Activated CD4-positive, alpha-beta T cell treated with anti-CD3 and anti-CD28 coated beads for 36 hours (primary cell): ENCODE measurements at regions of chr3 and their contacts with region 1.

Region 1: DNA sequence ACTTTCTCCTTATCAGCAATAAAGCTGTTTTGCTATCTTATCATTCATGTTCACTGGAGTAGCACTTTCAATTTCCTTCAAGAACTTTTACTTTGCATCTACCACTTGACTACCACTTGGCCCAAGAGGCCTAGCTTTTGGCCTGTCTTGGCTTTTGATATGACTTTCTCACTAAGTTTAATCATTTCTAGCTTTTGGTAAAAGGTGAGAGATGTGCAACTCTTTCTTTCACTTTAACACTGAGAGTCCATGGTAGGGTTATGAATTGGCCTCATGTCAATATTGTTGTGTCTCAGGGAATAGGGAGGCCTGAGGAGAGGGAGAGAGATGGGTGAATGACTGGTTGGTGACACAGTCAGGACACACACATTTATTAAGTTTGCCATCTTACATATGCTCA is 31.0 kb upstream of the FAM3D start:
- DNase-seq: peak; percentile 9
- ATAC-seq: peak; percentile 72
- H3K4me3 Mint-ChIP-seq: no peak overlapping the region
- H3K27ac Mint-ChIP-seq: no peak overlapping the region
- H3K4me1 Mint-ChIP-seq: peaks cover 7% of the 10 kb centered on the region
- H3K27me3 Mint-ChIP-seq: peaks cover 7% of the 10 kb centered on the region

Region 2: DNA sequence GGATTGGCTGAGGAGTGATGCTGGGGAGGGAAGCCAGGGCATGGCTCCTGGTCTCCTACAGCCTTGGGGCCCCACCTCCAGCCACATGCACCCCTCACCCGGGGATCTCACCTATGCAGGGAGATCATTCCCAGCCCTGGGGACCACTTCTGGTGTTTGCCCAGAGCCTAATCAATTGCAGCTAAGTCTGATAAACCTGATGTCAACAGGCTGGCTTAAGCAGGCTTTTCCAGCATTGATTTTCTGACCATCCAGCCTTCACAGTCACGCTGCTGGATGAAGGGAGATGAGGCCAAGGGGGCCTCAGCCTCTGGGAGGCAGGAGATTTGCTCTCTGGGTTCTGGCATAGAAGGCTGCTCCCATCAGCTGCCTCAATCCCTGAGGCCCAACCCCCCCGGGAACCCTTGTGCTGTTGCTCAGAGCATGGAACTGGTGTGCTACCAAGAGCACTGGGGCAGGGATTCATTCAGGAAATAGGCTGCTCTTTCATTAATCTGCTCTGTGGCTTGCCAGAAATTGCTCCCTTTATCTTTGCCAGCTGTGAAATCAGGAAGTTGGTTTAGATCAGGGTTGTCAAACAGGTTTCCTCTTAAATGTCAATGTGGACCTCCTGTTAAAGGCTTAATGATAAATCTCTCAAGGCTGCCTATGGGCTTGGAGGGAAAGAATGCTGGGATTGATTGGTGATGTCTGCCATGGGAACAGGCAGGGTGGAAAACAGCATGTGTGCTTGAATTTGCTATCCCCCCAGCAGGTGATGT is 50.0 kb before region 1 on chr3:
- CTCF ChIA-PET with region 1: interaction called, 3 read pairs
- POLR2A ChIA-PET with region 1: no interaction called
- intact Hi-C with region 1: loop called in 1 of 2 experiments (anchors 5 kb)
- DNase-seq: no peak
- ATAC-seq: no peak
- H3K4me3 Mint-ChIP-seq: no peak overlapping the region
- H3K27ac Mint-ChIP-seq: no peak overlapping the region
- H3K4me1 Mint-ChIP-seq: no peaks in the 10 kb centered on the region
- H3K27me3 Mint-ChIP-seq: peaks cover under 1% of the 10 kb centered on the region

Region 3: DNA sequence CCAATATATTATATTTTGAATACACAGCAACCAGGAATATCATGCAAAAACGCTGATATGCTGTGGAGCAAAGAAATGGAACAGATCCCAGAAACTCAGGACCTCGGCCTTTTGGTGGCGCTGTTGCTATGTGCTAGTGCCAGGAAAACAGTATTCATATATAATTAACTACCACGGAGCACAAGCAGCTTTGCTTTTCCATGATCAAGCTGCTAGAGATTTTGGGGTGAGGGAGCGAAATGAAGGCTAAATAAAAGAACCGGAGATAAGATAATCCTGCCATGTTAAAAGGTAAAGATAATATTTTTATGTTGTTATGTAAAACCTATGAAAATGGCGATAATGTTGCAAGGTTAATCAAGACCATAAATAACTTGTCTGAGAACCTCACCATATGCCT is 126.7 kb after region 1 on chr3:
- CTCF ChIA-PET with region 1: no interaction called
- POLR2A ChIA-PET with region 1: no interaction called
- intact Hi-C with region 1: no loop called
- DNase-seq: peak; percentile 69
- ATAC-seq: no peak
- H3K4me3 Mint-ChIP-seq: no peak overlapping the region
- H3K27ac Mint-ChIP-seq: no peak overlapping the region
- H3K4me1 Mint-ChIP-seq: no peaks in the 10 kb centered on the region
- H3K27me3 Mint-ChIP-seq: no peaks in the 10 kb centered on the region